ENCODE measurements at regions of chr12 and their contacts with region 1.

Region 1: GRCh38 chr12:76720068-76720467 is 43.8 kb upstream of the ZDHHC17 start:
- DNase-seq: peak; percentile 38 to 51
- H3K4me3 ChIP-seq: no peak overlapping the region
- H3K4me3 Mint-ChIP-seq: peak overlapping the region; percentile 27
- H3K27ac Mint-ChIP-seq: peak overlapping the region; percentile 87
- H3K4me1 ChIP-seq: peaks cover 46% of the 10 kb centered on the region
- H3K4me1 Mint-ChIP-seq: peaks cover 25% of the 10 kb centered on the region
- H3K27me3 ChIP-seq: no peaks in the 10 kb centered on the region
- H3K27me3 Mint-ChIP-seq: no peaks in the 10 kb centered on the region
- CTCF ChIP-seq: no peak

Region 2: DNA sequence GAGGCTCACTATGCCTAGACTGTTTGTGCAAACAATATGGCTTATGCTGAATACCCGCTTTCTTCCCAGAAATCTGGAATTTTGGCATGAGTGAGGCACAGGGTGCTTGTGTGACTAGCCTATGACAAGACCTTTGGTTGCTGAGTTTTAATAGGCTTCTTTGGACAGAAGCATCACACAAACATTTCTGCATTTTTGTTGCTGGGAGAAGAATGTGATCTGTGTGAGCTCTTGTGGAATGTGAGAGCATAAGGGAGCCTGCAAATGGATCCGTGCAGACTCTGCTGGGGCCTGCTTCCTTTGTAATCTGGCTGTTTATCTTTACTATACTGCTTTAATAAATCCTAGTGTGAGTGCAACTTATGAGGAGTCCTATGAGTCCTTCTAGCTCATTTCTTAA is 39.1 kb before region 1 on chr12:
- CTCF ChIA-PET with region 1: no interaction called
- POLR2A ChIA-PET with region 1: no interaction called
- intact Hi-C with region 1: no loop called
- DNase-seq: no peak
- H3K4me3 ChIP-seq: no peak overlapping the region
- H3K4me3 Mint-ChIP-seq: no peak overlapping the region
- H3K27ac Mint-ChIP-seq: no peak overlapping the region
- H3K4me1 ChIP-seq: no peaks in the 10 kb centered on the region; the same call in 1 of the 2 replicates
- H3K4me1 Mint-ChIP-seq: peaks cover 7% of the 10 kb centered on the region
- H3K27me3 ChIP-seq: no peaks in the 10 kb centered on the region
- H3K27me3 Mint-ChIP-seq: no peaks in the 10 kb centered on the region
- CTCF ChIP-seq: no peak

Region 3: GRCh38 chr12:76763743-76764675 is 43.9 kb after region 1 on chr12 and contains the start of gene ZDHHC17:
- CTCF ChIA-PET with region 1: interaction called, 3 read pairs
- POLR2A ChIA-PET with region 1: interaction called, 4 read pairs
- intact Hi-C with region 1: loop called (anchors 1 kb)
- DNase-seq: peak; percentile 95 to 97
- H3K4me3 ChIP-seq: peak within 1 kb of the TSS; percentile 98
- H3K4me3 Mint-ChIP-seq: peak within 1 kb of the TSS; percentile 95
- H3K27ac Mint-ChIP-seq: peak within 1 kb of the TSS; percentile 92
- H3K4me1 ChIP-seq: peaks cover 29% of the 10 kb centered on the region
- H3K4me1 Mint-ChIP-seq: peaks cover 18% of the 10 kb centered on the region
- H3K27me3 ChIP-seq: no peaks in the 10 kb centered on the region
- H3K27me3 Mint-ChIP-seq: no peaks in the 10 kb centered on the region
- CTCF ChIP-seq: no peak
- total RNA-seq, gene ZDHHC17: 31.1 and 32.2 TPM in 2 replicates